ENCODE measurements at regions of chr16 and their contacts with region 1.

Region 1: GRCh38 chr16:81585785-81586184 is 141.2 kb downstream of the CMIP start:
- DNase-seq: no peak
- H3K4me3 ChIP-seq: no peak overlapping the region
- H3K27ac ChIP-seq: no peak overlapping the region
- H3K4me1 ChIP-seq: peaks cover 55% of the 10 kb centered on the region
- H3K27me3 ChIP-seq: no peaks in the 10 kb centered on the region
- CTCF ChIP-seq: peak; percentile 14 to 48

Region 2: GRCh38 chr16:81444448-81445121 is 141.2 kb before region 1 on chr16 and contains the start of gene CMIP:
- CTCF ChIA-PET with region 1: no interaction called
- dilution Hi-C with region 1: no loop called
- in situ Hi-C with region 1: no loop called
- intact Hi-C with region 1: loop called (anchors 5 kb)
- DNase-seq: peak; percentile 74
- H3K4me3 ChIP-seq: peak within 1 kb of the TSS; percentile 69 to 94 (median 72)
- H3K27ac ChIP-seq: peak within 1 kb of the TSS; percentile 93
- H3K4me1 ChIP-seq: peaks cover 26% of the 10 kb centered on the region
- H3K27me3 ChIP-seq: no peaks in the 10 kb centered on the region
- CTCF ChIP-seq: no peak
- total RNA-seq, gene CMIP: 44.5 to 98.5 TPM

Region 3: GRCh38 chr16:81493755-81494433 is 91.9 kb before region 1 on chr16:
- CTCF ChIA-PET with region 1: no interaction called
- dilution Hi-C with region 1: loop called (anchors 5 kb)
- in situ Hi-C with region 1: no loop called
- intact Hi-C with region 1: loop called (anchors 5 kb)
- DNase-seq: peak; percentile 97
- H3K4me3 ChIP-seq: no peak overlapping the region
- H3K27ac ChIP-seq: peak overlapping the region; percentile 90
- H3K4me1 ChIP-seq: peaks cover 56% of the 10 kb centered on the region
- H3K27me3 ChIP-seq: no peaks in the 10 kb centered on the region
- CTCF ChIP-seq: no peak

Region 4: DNA sequence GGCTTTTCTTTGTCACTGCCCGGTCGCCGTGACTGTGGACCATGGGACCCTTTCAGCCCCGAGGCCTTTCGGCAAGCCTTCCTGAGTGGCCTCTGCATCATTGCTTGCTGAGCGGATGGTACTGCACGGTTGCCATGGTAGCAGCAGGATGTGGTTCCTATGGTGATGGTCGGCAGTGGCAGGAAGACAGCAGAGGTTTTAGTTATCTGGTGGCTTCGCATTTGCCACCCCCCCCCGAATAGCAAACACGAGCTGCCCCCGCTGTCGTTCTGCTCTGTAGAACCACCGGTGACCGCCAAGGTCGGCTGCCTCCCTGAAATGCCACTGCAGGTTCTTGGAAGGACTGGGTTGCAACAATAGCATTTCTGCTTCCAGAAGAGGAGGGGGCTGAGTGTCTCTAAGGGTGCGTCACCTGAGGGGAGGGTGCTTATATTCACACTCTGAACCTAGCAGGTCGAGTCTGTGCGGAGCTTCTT is 64.6 kb before region 1 on chr16:
- CTCF ChIA-PET with region 1: interaction called, 3 read pairs
- dilution Hi-C with region 1: loop called (anchors 5 kb)
- in situ Hi-C with region 1: no loop called
- intact Hi-C with region 1: loop called (anchors 1 kb)
- DNase-seq: no peak
- H3K4me3 ChIP-seq: no peak overlapping the region
- H3K27ac ChIP-seq: no peak overlapping the region
- H3K4me1 ChIP-seq: peaks cover 44% of the 10 kb centered on the region
- H3K27me3 ChIP-seq: no peaks in the 10 kb centered on the region
- CTCF ChIP-seq: no peak

Region 5: GRCh38 chr16:81544664-81545271 is 41.0 kb before region 1 on chr16:
- CTCF ChIA-PET with region 1: no interaction called
- dilution Hi-C with region 1: loop called (anchors 5 kb)
- in situ Hi-C with region 1: no loop called
- intact Hi-C with region 1: no loop called
- DNase-seq: no peak
- H3K4me3 ChIP-seq: no peak overlapping the region
- H3K27ac ChIP-seq: no peak overlapping the region
- H3K4me1 ChIP-seq: peaks cover 23% of the 10 kb centered on the region
- H3K27me3 ChIP-seq: no peaks in the 10 kb centered on the region
- CTCF ChIP-seq: no peak

Region 6: GRCh38 chr16:81696961-81697615 is 111.3 kb after region 1 on chr16:
- CTCF ChIA-PET with region 1: no interaction called
- dilution Hi-C with region 1: loop called (anchors 5 kb)
- in situ Hi-C with region 1: no loop called
- intact Hi-C with region 1: loop called (anchors 5 kb)
- DNase-seq: peak; percentile 48
- H3K4me3 ChIP-seq: no peak overlapping the region
- H3K27ac ChIP-seq: no peak overlapping the region
- H3K4me1 ChIP-seq: peaks cover 40% of the 10 kb centered on the region
- H3K27me3 ChIP-seq: no peaks in the 10 kb centered on the region
- CTCF ChIP-seq: peak; percentile 76 to 80

Region 7: GRCh38 chr16:81723098-81723723 is 137.4 kb after region 1 on chr16:
- CTCF ChIA-PET with region 1: no interaction called
- dilution Hi-C with region 1: no loop called
- in situ Hi-C with region 1: no loop called
- intact Hi-C with region 1: loop called (anchors 2 kb)
- DNase-seq: peak; percentile 73
- H3K4me3 ChIP-seq: no peak overlapping the region
- H3K27ac ChIP-seq: no peak overlapping the region
- H3K4me1 ChIP-seq: peaks cover 8% of the 10 kb centered on the region
- H3K27me3 ChIP-seq: no peaks in the 10 kb centered on the region
- CTCF ChIP-seq: peak; percentile 50 to 66